ENCODE measurements at regions of chr6 and their contacts with region 1.

Region 1: DNA sequence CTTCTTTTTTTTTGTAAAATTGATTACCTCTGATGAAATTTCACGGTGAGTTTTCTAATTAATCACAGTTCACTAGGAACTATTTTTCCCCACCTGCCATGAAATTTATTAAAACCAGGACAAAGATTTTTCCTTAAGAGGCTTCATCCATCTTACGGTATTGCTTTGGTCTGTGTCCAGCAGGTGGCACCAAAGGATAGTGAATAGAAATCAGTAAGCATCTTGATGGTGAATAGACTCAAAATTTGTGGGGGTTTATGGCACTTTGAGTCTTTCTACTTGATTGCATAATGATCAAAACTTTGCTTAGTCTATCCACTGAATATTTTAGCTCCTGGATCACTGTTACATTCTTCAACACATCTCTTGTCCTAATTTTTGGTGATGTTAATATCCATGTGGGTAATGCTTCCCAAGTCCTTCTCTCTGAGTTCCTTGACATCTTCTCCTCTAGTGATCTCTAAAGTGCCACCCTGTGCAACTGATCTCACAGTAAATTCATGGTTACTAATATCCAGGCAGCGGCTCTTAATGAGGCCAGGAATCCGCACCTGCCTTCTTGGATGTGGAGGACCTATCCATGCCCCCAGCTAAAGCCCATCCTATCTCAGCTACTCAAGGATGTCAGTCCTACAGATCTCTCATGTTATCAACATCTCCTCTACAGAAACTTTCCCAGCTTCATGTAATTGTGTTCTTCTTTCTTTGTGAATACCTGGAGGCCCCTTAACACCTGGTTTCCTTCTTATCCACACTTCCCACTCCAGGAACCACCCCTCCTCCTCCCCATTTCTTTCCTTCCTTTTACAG is 54.5 kb downstream of the STMND1 start:
- DNase-seq: peak; percentile 91
- H3K4me3 ChIP-seq: no peak overlapping the region
- H3K27ac ChIP-seq: no peak overlapping the region
- H3K4me1 ChIP-seq: peaks cover 0 to 4% (median 0%) of the 10 kb centered on the region in 4 donors
- H3K27me3 ChIP-seq: no peaks in the 10 kb centered on the region
- CTCF ChIP-seq: peak; percentile 77 to 82 (median 81)
- EP300 ChIP-seq: no peak
- POLR2A ChIP-seq: no peak

Region 2: GRCh38 chr6:17269840-17270239 is 113.5 kb after region 1 on chr6:
- intact Hi-C with region 1: loop called (anchors 10 kb)
- DNase-seq: no peak
- H3K4me3 ChIP-seq: no peak overlapping the region
- H3K27ac ChIP-seq: peak overlapping the region in 2 of 4 donors; percentile 23 to 32
- H3K4me1 ChIP-seq: peaks cover 3 to 27% (median 18%) of the 10 kb centered on the region in 4 donors
- H3K27me3 ChIP-seq: no peaks in the 10 kb centered on the region
- CTCF ChIP-seq: no peak
- EP300 ChIP-seq: no peak
- POLR2A ChIP-seq: no peak

Region 3: DNA sequence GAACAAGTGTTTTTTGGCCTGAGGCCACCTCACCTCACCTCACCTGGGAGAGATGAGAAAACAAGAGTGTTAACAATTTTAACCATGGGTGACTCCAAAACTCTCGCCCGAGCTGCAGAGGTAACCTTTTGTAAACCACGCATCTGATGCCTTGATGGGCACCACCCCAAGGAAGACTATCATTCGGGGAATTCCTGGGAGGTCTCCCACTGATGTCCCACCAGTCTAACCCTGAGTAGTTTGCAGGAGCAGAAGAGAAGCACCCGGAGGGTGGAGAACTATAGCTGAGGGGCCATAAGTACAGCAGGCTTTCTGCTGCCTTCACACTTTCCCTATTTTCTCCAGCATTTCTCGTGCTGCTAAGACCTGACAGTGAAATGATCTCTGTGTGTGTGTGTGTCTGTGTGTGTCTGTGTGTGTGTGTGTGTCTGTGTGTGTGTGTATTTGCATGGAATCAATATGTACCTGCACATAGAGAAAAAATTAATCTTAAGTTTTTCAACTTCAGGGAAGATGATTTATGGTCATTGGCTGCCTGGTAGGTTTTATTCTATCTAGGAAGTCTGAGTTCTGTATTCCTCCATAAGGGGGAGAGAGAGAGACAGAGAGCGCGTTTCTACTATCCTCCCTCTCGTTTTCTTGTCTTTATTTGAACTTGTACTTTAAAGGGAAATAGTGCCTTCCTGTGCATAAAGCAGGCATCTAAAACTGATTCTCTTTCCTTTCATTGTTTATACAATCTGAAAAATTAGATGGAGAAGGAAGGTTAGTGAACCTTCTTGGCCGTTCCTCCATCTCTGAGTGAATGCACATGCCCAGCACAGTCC is 312.9 kb after region 1 on chr6:
- intact Hi-C with region 1: loop called (anchors 5 kb)
- DNase-seq: no peak
- H3K4me3 ChIP-seq: peak overlapping the region in 2 of 4 donors; percentile 4 to 24
- H3K27ac ChIP-seq: peak overlapping the region; percentile 84 to 85 (median 84)
- H3K4me1 ChIP-seq: peaks cover 26 to 57% (median 55%) of the 10 kb centered on the region in 4 donors
- H3K27me3 ChIP-seq: no peaks in the 10 kb centered on the region
- CTCF ChIP-seq: peak; percentile 54 to 70 (median 67)
- EP300 ChIP-seq: no peak
- POLR2A ChIP-seq: no peak

Region 4: DNA sequence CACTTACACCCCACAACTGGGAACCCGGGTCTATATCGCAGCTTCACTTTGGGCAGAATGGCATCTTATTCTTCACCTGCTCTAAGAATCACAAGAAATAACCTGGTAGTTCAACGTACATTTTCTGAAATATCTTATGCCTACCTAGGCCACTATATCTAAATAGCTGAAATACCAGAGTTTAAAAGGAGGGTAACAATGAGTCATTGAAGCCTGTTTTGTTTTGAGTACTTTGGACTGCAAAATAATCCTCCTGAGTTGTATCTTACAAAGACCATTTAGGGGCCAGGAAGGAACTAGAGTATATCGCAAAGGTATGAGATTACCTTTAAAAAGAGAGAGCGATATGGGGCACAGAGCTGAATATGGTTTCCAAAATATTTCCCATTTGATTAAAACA is 647.1 kb after region 1 on chr6:
- intact Hi-C with region 1: loop called (anchors 5 kb)
- DNase-seq: no peak
- H3K4me3 ChIP-seq: no peak overlapping the region
- H3K27ac ChIP-seq: no peak overlapping the region
- H3K4me1 ChIP-seq: no peaks in the 10 kb centered on the region
- H3K27me3 ChIP-seq: no peaks in the 10 kb centered on the region
- CTCF ChIP-seq: no peak
- EP300 ChIP-seq: no peak
- POLR2A ChIP-seq: no peak

Region 5: DNA sequence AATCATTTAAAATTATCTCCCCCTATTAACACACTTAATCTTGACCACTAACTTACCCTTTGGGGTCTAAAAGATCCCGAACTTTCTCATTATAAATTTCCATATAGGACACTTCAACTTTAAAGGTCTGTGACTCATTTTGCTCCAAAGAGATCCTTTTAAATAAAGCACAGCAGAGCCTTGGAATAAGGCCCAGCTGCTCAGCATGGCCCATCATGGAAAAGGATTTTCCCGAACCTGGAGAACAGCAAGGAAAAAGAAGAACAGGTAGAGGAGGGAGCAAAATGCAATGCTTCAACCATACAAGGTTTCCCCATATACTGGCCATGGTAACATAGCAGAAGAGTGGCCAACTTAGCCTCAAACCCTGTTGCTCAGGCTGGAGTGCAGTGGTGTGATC is 699.1 kb after region 1 on chr6:
- intact Hi-C with region 1: no loop called
- DNase-seq: no peak
- H3K4me3 ChIP-seq: no peak overlapping the region
- H3K27ac ChIP-seq: no peak overlapping the region
- H3K4me1 ChIP-seq: peaks cover 6 to 43% (median 36%) of the 10 kb centered on the region in 4 donors
- H3K27me3 ChIP-seq: no peaks in the 10 kb centered on the region
- CTCF ChIP-seq: no peak
- EP300 ChIP-seq: no peak
- POLR2A ChIP-seq: no peak

Measured in esophagus muscularis mucosa (tissue), 4 donors.